ENCODE measurements at regions of chr5 and their contacts with region 1.

Region 1: DNA sequence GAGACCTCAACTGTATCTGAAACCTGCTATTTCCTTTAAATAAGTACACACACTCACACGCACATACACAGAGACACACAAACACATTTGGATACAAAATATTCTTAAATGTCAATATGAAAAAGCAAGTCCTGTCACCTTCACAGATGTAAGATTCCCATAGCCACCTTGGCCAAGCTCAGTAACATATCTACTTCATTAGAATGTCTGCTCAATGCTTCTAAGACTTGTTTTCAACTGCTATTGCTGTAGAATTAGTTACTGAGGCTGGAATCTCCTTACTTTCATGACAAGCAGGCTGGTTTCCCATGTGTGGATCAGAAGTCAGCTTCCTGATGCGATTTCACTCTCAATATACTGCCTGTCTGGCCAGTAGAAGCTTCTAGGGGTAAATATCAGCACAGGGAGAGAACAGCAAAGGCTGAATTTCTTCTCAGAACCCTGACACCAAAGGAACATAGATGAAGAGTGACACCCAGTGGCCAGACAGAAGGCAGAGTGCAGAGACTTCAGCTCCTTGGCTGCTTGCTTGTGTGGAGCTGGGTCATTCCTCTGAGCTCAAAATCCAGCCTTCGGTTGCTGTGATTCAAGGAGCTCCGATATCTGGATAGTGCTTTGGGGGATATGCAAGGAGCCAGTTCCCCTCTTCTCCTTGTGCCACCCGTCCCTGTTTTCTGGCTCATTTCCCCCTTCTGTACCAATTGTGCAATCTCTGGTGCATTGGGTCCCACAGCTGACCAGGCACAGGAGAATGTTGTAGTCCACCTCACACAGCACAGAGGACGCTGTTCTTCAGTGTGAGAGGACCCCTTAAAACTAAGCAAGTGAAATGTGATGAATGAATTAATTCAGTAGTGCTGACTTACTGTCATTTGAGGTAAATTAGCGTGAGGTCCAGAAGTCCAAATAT is 26.6 kb upstream of the ABLIM3 start:
- DNase-seq: peak; percentile 77 to 88 (median 85)
- H3K4me3 ChIP-seq: no peak overlapping the region
- H3K27ac ChIP-seq: no peak overlapping the region
- H3K4me1 ChIP-seq: peaks cover 0 to 8% (median 3%) of the 10 kb centered on the region in 4 experiments
- H3K27me3 ChIP-seq: no peaks in the 10 kb centered on the region

Region 2: GRCh38 chr5:148443998-148444397 is 670.7 kb before region 1 on chr5:
- CTCF ChIA-PET with region 1: interaction called, 16 read pairs
- POLR2A ChIA-PET with region 1: no interaction called
- DNase-seq: peak; percentile 65 to 83 (median 80)
- H3K4me3 ChIP-seq: no peak overlapping the region
- H3K27ac ChIP-seq: no peak overlapping the region
- H3K4me1 ChIP-seq: no peaks in the 10 kb centered on the region
- H3K27me3 ChIP-seq: no peaks in the 10 kb centered on the region

Region 3: GRCh38 chr5:148957591-148958202 is 157.0 kb before region 1 on chr5:
- CTCF ChIA-PET with region 1: interaction called, 23 read pairs
- POLR2A ChIA-PET with region 1: no interaction called
- DNase-seq: peak; percentile 54 to 77 (median 73)
- H3K4me3 ChIP-seq: no peak overlapping the region
- H3K27ac ChIP-seq: no peak overlapping the region
- H3K4me1 ChIP-seq: peaks cover 0 to 11% (median 2%) of the 10 kb centered on the region in 4 experiments
- H3K27me3 ChIP-seq: no peaks in the 10 kb centered on the region